Activated B cell treated with CpG ODN at 0.5 μM for 24 hours (primary cell): ENCODE measurements at regions of chr22 and their contacts with region 1.

Region 1: DNA sequence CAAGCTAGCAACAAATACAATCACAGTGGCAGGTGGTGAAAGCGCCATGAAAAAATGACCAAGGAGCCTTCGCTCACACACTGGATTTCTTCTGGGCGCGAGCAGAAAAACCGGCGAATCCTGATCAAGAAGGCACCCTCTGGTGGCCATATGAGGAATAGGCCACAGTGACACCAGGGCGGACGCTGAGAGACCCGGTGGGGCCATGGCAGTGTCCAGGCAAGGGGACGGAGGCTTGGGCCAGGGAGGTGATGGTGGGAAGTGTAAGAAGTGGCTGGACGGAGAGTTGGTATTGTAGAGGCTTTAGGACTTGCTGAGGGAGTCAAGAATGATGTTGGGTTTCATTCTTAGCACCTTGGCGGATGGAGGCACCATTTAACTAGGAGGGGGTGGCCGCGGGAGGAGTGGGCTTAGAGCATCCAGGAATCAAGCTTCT is 16.9 kb upstream of the RAC2 start:
- DNase-seq: no peak
- ATAC-seq: peak; percentile 88
- H3K4me3 Mint-ChIP-seq: peak overlapping the region; percentile 2
- H3K27ac Mint-ChIP-seq: no peak overlapping the region
- H3K4me1 Mint-ChIP-seq: peaks cover 38% of the 10 kb centered on the region
- H3K27me3 Mint-ChIP-seq: no peaks in the 10 kb centered on the region
- CTCF ChIP-seq: peak; percentile 44

Region 2: DNA sequence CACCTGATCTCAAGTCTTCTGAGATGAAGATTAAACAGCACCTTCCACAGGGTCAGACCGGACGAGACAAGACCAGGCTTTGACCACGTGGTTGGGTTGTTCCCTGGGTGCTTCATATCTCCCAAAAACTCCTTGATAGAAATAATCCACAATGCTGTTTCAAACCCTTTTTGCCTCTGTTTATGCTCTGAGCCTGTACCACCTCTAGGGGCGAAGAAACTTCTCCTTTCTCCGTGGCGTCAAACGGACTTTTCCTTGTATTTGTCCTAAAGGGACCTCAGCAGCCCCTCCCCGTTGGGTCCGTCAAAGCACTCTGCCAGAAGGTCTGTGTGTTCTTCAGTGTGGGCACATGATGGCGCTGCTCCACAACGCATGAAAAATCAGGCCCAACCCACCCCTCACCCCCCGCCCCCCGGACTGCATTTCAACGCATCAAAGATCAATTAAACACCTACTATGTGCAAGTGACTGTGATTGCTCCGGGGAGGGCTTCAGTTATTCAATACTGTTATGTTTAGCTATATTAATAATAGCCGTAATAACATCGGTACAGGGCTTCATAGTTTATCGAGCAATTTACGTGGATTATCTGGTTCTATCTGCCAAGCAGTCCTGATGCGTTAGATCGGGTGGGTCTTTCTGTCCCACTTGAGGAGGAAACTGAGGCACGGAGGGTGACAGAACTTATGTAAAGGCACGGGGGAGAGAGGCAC is 714.7 kb before region 1 on chr22:
- CTCF ChIA-PET with region 1: interaction called, 3 read pairs
- POLR2A ChIA-PET with region 1: no interaction called
- intact Hi-C with region 1: loop called (anchors 2 kb)
- DNase-seq: no peak
- ATAC-seq: peak; percentile 82
- H3K4me3 Mint-ChIP-seq: no peak overlapping the region
- H3K27ac Mint-ChIP-seq: no peak overlapping the region
- H3K4me1 Mint-ChIP-seq: peaks cover 28% of the 10 kb centered on the region
- H3K27me3 Mint-ChIP-seq: no peaks in the 10 kb centered on the region
- CTCF ChIP-seq: no peak

Region 3: DNA sequence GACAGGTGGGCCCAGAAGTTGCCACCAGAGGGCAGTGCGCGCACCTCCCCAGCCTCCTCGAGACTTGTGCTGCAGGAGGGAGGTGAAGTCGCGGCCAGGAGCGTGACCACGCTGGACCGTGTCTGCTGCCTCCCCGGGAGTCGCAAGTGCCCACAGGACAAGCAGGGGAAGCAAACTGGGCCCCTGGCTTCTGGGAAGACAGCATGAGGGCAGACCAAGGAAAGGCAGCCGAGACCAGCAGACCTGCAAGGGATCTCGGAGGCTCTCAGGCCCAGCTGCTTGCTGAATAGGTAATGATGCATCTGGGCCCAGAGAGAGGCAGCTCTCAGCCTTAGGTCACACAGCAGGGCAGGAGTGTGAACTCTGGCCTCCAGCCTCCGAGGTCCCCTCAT is 94.2 kb before region 1 on chr22:
- CTCF ChIA-PET with region 1: interaction called, 24 read pairs
- POLR2A ChIA-PET with region 1: no interaction called
- intact Hi-C with region 1: loop called (anchors 1 kb)
- DNase-seq: peak; percentile 73
- ATAC-seq: peak; percentile 44
- H3K4me3 Mint-ChIP-seq: peak overlapping the region; percentile 7
- H3K27ac Mint-ChIP-seq: peak overlapping the region; percentile 21
- H3K4me1 Mint-ChIP-seq: peaks cover 39% of the 10 kb centered on the region
- H3K27me3 Mint-ChIP-seq: no peaks in the 10 kb centered on the region
- CTCF ChIP-seq: peak; percentile 69

Region 4: GRCh38 chr22:37229805-37230672 is 30.9 kb before region 1 on chr22:
- CTCF ChIA-PET with region 1: interaction called, 59 read pairs
- POLR2A ChIA-PET with region 1: interaction called, 19 read pairs
- intact Hi-C with region 1: loop called (anchors 1 kb)
- DNase-seq: peak; percentile 70
- ATAC-seq: peak; percentile 82
- H3K4me3 Mint-ChIP-seq: peak overlapping the region; percentile 72
- H3K27ac Mint-ChIP-seq: peak overlapping the region; percentile 99
- H3K4me1 Mint-ChIP-seq: peaks cover 91% of the 10 kb centered on the region
- H3K27me3 Mint-ChIP-seq: no peaks in the 10 kb centered on the region
- CTCF ChIP-seq: no peak

Region 5: DNA sequence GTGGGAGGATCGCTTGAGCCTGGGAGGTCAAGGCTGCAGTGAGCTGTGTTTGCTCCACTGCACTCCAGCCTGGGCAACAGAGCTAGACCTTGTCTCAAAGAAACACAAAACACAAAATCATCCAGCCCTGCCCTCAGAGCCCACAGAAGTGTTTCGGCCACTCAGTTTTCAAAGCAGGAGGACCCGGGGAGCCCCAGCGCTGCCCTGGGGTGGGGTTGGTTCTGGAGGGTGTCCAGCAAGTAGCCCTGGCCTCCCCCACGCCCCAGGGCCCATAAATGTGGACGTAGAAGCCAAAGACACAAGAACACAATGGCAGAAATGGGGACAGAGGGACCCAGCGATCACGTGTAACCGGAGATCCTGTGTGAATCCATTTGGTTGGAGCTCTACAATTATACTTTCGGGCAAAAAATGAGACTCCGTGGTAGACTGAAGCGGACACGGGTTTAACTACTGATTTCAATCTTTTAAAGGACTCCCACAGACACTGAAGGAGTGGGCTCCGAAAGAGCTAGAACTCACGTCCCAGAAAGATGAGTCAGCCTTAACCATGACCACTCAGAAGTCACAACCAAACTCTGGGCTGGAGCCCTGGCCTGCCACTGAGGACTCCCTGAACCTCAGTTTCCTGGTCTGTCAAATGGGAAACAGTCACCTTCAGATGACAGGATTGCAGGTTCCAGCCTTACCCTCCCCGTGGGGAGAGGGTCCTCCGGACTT is 12.4 kb after region 1 on chr22:
- CTCF ChIA-PET with region 1: interaction called, 12 read pairs
- POLR2A ChIA-PET with region 1: interaction called, 8 read pairs
- intact Hi-C with region 1: no loop called
- DNase-seq: no peak
- ATAC-seq: no peak
- H3K4me3 Mint-ChIP-seq: no peak overlapping the region
- H3K27ac Mint-ChIP-seq: peak overlapping the region; percentile 30
- H3K4me1 Mint-ChIP-seq: peaks cover 58% of the 10 kb centered on the region
- H3K27me3 Mint-ChIP-seq: no peaks in the 10 kb centered on the region
- CTCF ChIP-seq: no peak

Region 6: GRCh38 chr22:37457093-37457893 is 196.4 kb after region 1 on chr22:
- CTCF ChIA-PET with region 1: interaction called, 12 read pairs
- POLR2A ChIA-PET with region 1: no interaction called
- intact Hi-C with region 1: no loop called
- DNase-seq: peak; percentile 71
- ATAC-seq: peak; percentile 95
- H3K4me3 Mint-ChIP-seq: no peak overlapping the region
- H3K27ac Mint-ChIP-seq: no peak overlapping the region
- H3K4me1 Mint-ChIP-seq: no peaks in the 10 kb centered on the region
- H3K27me3 Mint-ChIP-seq: no peaks in the 10 kb centered on the region
- CTCF ChIP-seq: peak; percentile 42

Region 7: DNA sequence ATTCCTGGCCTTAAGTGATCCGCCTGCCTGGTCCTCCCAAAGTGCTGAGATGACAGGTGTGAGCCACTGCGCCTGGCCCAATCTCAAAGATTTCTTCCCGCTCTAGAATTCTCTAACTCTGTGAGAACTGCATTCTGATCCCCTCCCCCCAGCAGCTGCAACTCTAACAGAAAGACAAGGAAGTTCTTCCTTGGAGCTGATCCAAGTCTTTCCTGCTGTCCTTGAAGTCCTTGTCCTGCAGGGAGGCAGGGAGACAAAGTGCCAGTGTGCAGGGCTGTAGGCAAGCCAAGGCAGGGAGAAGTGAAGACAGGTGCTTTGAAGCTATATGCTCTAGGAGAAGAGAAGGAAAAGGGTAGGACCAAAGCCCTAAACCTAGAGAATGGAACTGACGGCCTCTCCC is 338.2 kb after region 1 on chr22:
- CTCF ChIA-PET with region 1: no interaction called
- POLR2A ChIA-PET with region 1: no interaction called
- intact Hi-C with region 1: no loop called
- DNase-seq: no peak
- ATAC-seq: no peak
- H3K4me3 Mint-ChIP-seq: no peak overlapping the region
- H3K27ac Mint-ChIP-seq: no peak overlapping the region
- H3K4me1 Mint-ChIP-seq: no peaks in the 10 kb centered on the region
- H3K27me3 Mint-ChIP-seq: peaks cover 10% of the 10 kb centered on the region
- CTCF ChIP-seq: no peak